Activated CD4-positive, alpha-beta T cell treated with anti-CD3 and anti-CD28 coated beads for 36 hours (primary cell): ENCODE measurements at regions of chr12 and their contacts with region 1.

Region 1: DNA sequence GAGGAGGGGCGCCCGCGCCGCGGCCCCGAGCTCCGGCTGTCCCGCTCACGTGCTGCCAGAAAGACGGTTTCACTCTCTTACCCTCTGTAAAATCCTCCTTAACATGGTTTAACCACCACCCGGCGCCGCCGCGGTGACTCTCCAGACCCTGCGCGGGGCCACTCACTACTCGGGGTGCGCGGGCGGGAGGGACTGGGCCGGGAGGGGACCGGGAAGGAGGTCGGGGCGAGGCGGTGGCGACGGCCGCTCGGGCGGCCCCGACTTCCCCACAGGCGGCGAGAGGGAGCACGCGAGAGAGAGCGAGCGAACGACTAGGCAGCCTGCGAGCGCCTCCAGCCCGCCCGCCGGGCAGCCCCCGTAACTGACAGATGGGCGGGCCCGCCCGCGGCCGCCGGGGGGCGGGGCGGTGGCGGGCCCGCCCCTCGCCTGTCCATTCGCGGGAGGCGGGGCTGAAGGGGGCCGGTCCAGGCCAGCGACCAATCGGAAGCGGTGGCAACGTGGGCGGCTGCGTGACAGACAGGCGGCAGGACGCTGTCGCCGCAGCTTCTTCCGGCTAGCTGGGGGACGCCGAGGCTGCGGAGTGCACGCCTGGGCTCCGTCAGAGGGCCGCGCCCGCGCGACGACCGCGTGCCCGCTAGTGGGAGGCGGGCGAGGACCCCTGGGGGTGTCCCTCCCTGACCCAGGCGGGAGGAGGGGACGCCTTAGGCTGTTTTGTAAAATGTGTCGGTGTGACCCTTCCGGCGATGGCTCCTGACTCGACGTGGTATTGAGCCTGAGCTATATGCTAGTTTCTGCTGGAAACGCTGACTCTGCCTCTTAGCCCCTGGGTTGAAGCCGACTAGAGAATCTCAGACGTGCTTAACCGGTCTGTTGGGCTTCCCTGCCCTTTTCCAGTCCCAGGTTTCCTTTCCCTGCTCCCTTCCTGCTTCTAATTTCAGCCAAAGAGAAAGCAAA is at the start of gene EEA1:
- DNase-seq: peak; percentile 99
- ATAC-seq: peak; percentile 80
- H3K4me3 Mint-ChIP-seq: peak within 1 kb of the TSS; percentile 86
- H3K27ac Mint-ChIP-seq: peak within 1 kb of the TSS; percentile 96
- H3K4me1 Mint-ChIP-seq: peaks cover 34% of the 10 kb centered on the region
- H3K27me3 Mint-ChIP-seq: no peaks in the 10 kb centered on the region
- total RNA-seq, gene EEA1: 20.2 to 33.2 TPM

Region 2: DNA sequence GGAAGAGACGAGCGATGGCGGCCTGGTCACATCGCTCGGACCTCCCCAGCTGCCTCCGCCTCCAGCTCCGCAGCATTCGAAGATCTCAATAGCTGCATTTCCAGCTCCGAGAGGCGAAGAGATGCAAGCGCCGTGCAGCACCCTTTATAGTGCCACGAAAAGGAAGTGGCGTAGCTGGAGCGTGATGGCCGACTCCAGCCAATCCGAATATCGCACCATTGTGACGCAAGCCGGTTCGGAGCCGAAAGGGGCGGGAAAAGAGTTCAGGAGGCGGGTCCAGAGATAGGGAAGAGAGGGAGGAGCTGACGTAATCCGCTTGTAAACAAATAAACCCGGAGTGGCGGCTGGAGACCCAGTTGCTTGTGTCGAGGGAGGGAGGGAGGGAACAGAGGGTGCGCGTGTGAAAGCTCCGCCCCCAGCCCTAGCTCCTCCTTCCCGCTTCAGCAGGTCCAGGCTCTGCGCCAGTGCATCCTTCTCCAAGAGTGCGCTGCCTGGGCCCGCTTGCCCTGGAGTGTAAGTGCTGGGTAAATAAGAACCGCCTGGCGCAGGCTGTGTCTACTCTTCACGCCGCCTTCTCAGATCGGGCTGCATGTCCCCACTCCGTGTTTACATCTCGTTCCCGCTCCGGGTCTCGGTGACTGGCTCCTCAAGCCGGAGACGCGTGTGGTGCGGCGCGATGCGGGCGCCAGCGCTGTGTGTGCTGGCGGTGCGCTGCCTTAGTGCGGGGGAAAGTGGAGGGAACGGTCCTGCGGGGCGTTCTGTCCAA is 783.3 kb before region 1 on chr12 and contains the start of gene BTG1:
- CTCF ChIA-PET with region 1: no interaction called
- POLR2A ChIA-PET with region 1: no interaction called
- intact Hi-C with region 1: loop called in 1 of 2 experiments (anchors 2 kb)
- DNase-seq: peak; percentile 99
- ATAC-seq: peak; percentile 78
- H3K4me3 Mint-ChIP-seq: peak within 1 kb of the TSS; percentile 99
- H3K27ac Mint-ChIP-seq: peak within 1 kb of the TSS; percentile 99
- H3K4me1 Mint-ChIP-seq: peaks cover 22% of the 10 kb centered on the region
- H3K27me3 Mint-ChIP-seq: no peaks in the 10 kb centered on the region
- total RNA-seq, gene BTG1: 76.6 to 131 TPM

Region 3: DNA sequence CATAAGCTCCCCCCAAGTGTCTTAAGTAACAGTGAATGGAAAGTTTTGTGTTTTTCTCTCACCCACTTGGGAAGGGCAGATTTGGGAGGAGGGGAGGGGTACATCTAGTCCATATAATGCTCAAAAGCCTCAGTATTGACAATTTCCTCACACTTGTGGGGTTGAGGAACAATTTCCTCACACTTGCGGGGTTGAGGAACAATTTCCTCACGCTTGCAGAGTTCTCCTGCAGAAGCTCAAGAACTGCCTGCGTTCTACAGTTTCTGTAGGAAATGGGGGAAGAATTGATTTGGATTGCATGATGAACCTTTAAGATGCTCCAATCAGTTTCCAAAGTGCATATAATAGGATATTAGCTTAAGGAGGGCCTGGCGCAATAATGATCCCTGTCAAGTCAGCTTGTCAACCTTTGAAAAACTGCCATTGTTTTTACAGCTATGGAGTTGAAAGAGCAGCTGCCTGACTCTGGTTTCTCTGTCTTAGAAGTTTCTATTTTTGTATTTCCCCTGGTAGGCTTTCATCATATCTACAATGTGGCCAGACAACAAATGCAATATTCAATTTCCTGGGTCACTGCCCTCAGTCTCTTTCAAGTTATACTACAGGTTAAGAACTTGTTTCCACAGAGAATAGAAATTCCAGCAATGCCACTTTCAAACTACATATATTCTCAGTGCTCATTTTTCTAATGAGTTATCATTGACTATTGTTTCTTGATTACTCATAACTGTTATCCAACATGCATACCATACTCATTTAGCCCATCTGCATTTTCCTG is 159.9 kb before region 1 on chr12:
- CTCF ChIA-PET with region 1: no interaction called
- POLR2A ChIA-PET with region 1: no interaction called
- intact Hi-C with region 1: no loop called
- DNase-seq: no peak
- ATAC-seq: peak; percentile 64
- H3K4me3 Mint-ChIP-seq: no peak overlapping the region
- H3K27ac Mint-ChIP-seq: no peak overlapping the region
- H3K4me1 Mint-ChIP-seq: peaks cover 15% of the 10 kb centered on the region
- H3K27me3 Mint-ChIP-seq: no peaks in the 10 kb centered on the region

Region 4: GRCh38 chr12:92784795-92785562 is 144.3 kb before region 1 on chr12:
- CTCF ChIA-PET with region 1: no interaction called
- POLR2A ChIA-PET with region 1: no interaction called
- intact Hi-C with region 1: loop called (anchors 5 kb)
- DNase-seq: peak; percentile 33
- ATAC-seq: peak; percentile 98
- H3K4me3 Mint-ChIP-seq: no peak overlapping the region
- H3K27ac Mint-ChIP-seq: no peak overlapping the region
- H3K4me1 Mint-ChIP-seq: peaks cover 2% of the 10 kb centered on the region
- H3K27me3 Mint-ChIP-seq: no peaks in the 10 kb centered on the region

Region 5: GRCh38 chr12:92796650-92797049 is 132.6 kb before region 1 on chr12:
- CTCF ChIA-PET with region 1: no interaction called
- POLR2A ChIA-PET with region 1: no interaction called
- intact Hi-C with region 1: no loop called
- DNase-seq: no peak
- ATAC-seq: no peak
- H3K4me3 Mint-ChIP-seq: no peak overlapping the region
- H3K27ac Mint-ChIP-seq: no peak overlapping the region
- H3K4me1 Mint-ChIP-seq: no peaks in the 10 kb centered on the region
- H3K27me3 Mint-ChIP-seq: no peaks in the 10 kb centered on the region

Region 6: DNA sequence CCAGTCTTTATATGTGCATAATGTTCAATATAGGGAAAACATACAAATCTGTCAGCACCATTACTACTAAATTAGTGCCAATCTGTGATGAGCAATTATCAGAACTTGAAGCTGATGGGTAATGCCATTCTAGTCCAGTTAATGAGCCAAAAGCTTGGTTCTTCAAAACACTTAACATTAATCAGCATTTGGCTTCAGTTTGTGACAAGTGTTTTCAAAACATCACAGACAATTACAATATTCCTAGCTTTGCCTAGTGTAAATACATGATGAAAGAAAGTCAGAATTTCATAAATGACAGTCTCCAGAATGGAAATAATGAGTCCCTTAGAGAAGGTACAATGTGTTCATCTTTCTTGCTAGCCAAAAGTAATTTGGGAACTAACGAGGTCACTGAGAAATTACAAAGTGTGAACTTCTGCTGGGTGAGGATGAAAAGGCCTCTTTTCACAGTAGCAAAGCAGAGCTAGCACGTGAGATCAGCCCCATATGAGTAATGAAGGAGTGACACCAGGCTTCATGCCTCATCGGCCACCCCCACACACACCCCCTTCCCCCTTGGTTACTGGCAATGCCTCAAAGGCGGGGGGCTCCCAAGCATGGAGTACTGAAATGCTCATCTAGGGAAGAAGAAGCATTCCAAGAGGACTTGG is 180.4 kb after region 1 on chr12:
- CTCF ChIA-PET with region 1: no interaction called
- POLR2A ChIA-PET with region 1: interaction called, 12 read pairs
- intact Hi-C with region 1: loop called in 1 of 2 experiments (anchors 5 kb)
- DNase-seq: peak; percentile 75
- ATAC-seq: peak; percentile 93
- H3K4me3 Mint-ChIP-seq: no peak overlapping the region
- H3K27ac Mint-ChIP-seq: peak overlapping the region; percentile 89
- H3K4me1 Mint-ChIP-seq: peaks cover 26% of the 10 kb centered on the region
- H3K27me3 Mint-ChIP-seq: no peaks in the 10 kb centered on the region

Region 7: GRCh38 chr12:93569656-93570551 is 640.7 kb after region 1 on chr12:
- CTCF ChIA-PET with region 1: no interaction called
- POLR2A ChIA-PET with region 1: no interaction called
- intact Hi-C with region 1: loop called in 1 of 2 experiments (anchors 1 kb)
- DNase-seq: peak; percentile 88
- ATAC-seq: peak; percentile 67
- H3K4me3 Mint-ChIP-seq: peak overlapping the region; percentile 82
- H3K27ac Mint-ChIP-seq: peak overlapping the region; percentile 75
- H3K4me1 Mint-ChIP-seq: peaks cover 16% of the 10 kb centered on the region
- H3K27me3 Mint-ChIP-seq: peaks cover 23% of the 10 kb centered on the region

Region 8: DNA sequence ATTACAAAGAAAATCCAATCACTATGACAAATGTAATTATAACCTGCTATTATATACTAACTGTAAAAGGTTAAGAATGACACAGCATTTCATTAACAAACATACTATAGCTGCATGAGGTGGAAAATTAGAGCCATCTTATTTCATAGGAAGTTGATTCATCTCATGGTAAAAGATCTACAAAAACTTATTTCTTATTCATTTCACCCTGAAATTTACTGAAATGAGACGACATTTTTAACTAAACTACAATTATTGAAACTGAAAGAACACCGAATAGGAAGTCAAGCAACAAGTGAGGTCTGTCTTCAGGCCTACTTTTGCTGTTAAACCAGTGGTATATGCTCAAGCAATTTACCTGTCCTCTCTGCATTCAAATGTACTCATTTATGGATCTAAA is 1443.2 kb after region 1 on chr12:
- CTCF ChIA-PET with region 1: no interaction called
- POLR2A ChIA-PET with region 1: no interaction called
- intact Hi-C with region 1: loop called in 1 of 2 experiments (anchors 10 kb)
- DNase-seq: no peak
- ATAC-seq: peak; percentile 93
- H3K4me3 Mint-ChIP-seq: no peak overlapping the region
- H3K27ac Mint-ChIP-seq: peak overlapping the region; percentile 80
- H3K4me1 Mint-ChIP-seq: peaks cover 26% of the 10 kb centered on the region
- H3K27me3 Mint-ChIP-seq: no peaks in the 10 kb centered on the region